Cardiac septum (tissue), 1 donor: ENCODE measurements at regions of chr17 and their contacts with region 1.

Region 1: GRCh38 chr17:17877529-17878358 is 41.0 kb upstream of the SREBF1 start:
- DNase-seq: peak; percentile 86

Region 2: DNA sequence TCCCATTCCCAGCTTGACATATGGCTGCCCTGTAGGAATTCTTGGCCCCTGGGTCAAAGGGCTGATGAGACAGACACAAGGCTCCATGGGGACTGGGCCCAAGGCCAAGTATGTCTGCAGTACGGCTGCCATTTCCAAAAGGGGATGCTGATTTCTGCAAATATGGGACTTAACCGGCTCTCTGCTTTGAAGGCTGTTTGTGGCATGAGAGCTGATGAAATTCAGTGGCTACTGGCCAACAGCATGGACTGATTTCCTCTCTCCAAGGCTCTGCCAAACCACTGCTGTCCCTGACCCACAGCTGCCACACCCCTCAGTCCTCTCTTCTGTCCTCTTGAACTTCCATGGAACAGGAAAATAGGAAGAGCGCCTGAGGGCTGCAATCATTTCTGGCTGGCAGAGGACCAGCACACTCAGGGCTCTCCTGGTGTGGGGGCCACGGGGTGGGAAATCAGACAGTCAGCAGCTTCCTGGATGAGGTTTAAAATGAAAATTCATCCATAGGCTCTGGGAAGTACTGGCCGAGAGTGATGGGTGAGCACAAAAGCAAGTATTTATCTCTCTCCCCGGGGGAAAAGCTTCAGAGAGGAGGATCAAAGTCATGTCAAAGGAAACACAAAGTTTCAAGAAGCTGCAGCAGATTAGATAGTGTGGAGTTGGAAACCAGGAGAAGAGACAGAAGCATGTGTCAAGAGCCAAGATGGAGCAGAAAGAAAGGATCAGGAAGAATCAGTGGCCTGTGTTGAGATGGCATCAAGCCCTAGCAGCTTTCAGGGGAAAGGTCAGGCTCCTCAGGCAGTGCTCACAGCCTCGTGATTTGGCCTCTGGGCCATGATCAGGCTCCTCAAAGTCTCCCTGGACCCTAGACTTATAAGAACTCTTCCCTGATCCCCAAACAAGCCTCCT is 23.1 kb after region 1 on chr17:
- intact Hi-C with region 1: loop called (anchors 2 kb)
- DNase-seq: peak; percentile 84

Region 3: DNA sequence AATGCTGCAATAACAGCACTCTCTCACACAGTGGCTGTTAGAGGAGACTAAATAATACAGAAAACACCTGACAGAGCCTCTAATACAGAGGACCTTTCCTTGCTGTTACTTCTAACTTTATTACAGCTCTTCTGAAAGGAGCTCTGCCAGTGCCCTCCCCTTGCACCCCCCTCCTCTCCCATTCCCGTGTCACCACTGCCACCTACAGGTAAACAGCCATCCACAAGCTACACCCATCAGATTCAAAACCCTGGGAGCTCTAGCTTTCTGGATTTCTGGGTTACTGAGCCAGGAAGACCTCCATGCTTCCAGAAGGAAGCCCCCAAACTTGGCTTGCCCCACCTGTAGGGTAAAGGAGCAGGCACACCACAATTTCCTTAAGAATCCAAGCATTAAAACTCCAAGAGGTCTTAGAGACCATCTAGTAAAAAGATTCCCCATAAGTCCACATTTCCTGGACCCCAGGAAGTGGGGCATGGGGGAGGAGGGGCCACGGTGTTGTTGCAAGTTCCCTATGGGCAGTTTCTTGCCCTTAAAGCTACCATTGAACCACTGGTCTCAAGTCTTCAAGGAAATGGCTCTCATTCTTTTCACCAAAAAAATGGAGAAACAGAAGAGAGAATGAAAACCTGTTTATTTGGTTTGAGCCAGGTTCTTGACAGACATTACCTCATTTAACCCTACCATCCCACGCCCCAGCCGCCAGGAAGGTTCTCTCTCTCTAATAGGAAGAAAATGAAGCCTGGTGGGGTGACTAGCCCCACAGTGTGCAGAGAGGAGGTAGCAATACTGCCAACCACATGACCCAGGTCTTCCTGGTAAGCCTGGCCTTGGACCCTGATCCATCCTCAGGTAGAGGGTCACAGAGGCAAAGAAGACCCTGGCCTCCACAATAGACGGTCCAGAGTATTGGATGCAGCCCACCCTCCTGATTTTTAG is 41.7 kb after region 1 on chr17:
- intact Hi-C with region 1: loop called (anchors 5 kb)
- DNase-seq: peak; percentile 80